Breast epithelium (tissue), 4 donors: ENCODE measurements at regions of chr7 and their contacts with region 1.

Region 1: GRCh38 chr7:145868935-145869334 is 247.7 kb upstream of the CNTNAP2 start:
- DNase-seq: no peak
- H3K4me3 ChIP-seq: no peak overlapping the region
- H3K27ac ChIP-seq: no peak overlapping the region
- H3K4me1 ChIP-seq: no peaks in the 10 kb centered on the region
- H3K27me3 ChIP-seq: no peaks in the 10 kb centered on the region
- CTCF ChIP-seq: no peak
- POLR2A ChIP-seq: no peak

Region 2: GRCh38 chr7:145774777-145775176 is 94.2 kb before region 1 on chr7:
- intact Hi-C with region 1: loop called (anchors 5 kb)
- DNase-seq: no peak
- H3K4me3 ChIP-seq: no peak overlapping the region
- H3K27ac ChIP-seq: no peak overlapping the region
- H3K4me1 ChIP-seq: no peaks in the 10 kb centered on the region
- H3K27me3 ChIP-seq: no peaks in the 10 kb centered on the region
- CTCF ChIP-seq: no peak
- POLR2A ChIP-seq: no peak

Region 3: GRCh38 chr7:147676146-147676545 is 1807.2 kb after region 1 on chr7:
- intact Hi-C with region 1: no loop called
- DNase-seq: no peak
- H3K4me3 ChIP-seq: no peak overlapping the region
- H3K27ac ChIP-seq: no peak overlapping the region
- H3K4me1 ChIP-seq: no peaks in the 10 kb centered on the region
- H3K27me3 ChIP-seq: no peaks in the 10 kb centered on the region
- CTCF ChIP-seq: no peak
- POLR2A ChIP-seq: no peak